Breast epithelium (tissue), 4 donors: ENCODE measurements at regions of chr7 and their contacts with region 1.

Region 1: DNA sequence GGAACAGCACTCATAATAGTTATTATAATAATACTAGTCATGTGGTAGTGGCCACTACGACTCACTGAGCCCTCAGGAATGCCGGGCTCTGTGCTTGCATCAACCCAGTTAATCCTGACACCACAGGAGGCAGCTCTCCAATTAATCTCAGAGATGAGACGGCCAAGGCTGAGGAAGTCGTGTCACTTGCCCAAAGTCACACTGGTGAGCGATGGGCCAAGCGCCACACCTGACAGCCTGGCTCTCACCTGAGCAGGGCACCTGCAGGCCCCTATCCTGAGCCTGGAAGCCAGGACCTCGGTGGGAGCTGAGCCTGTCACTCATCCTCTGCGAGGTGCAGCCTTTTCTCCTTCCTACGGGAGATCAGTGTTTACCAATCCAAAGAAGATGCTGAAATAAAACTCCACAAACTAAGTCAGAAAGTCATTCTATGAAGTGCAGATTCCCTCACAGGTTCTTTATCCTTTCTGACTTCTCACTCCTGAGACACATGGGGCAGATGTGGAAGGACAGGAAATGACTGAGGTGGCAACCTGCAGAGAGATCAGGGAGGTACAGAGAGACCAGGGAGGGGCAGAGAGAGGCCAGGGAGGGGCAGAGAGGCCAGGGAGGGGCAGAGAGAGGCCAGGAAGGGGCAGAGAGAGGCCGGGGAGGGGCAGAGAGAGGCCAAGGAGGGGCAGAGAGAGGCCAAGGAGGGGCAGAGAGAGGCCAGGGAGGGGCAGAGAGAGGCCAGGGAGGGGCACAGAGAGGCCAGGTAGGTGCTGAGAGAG is 38.6 kb downstream of the VIPR2 start:
- DNase-seq: peak in 1 of 2 donors; percentile 25
- H3K4me3 ChIP-seq: no peak overlapping the region
- H3K27ac ChIP-seq: no peak overlapping the region
- H3K4me1 ChIP-seq: no peaks in the 10 kb centered on the region
- H3K27me3 ChIP-seq: no peaks in the 10 kb centered on the region
- CTCF ChIP-seq: no peak
- POLR2A ChIP-seq: no peak

Region 2: DNA sequence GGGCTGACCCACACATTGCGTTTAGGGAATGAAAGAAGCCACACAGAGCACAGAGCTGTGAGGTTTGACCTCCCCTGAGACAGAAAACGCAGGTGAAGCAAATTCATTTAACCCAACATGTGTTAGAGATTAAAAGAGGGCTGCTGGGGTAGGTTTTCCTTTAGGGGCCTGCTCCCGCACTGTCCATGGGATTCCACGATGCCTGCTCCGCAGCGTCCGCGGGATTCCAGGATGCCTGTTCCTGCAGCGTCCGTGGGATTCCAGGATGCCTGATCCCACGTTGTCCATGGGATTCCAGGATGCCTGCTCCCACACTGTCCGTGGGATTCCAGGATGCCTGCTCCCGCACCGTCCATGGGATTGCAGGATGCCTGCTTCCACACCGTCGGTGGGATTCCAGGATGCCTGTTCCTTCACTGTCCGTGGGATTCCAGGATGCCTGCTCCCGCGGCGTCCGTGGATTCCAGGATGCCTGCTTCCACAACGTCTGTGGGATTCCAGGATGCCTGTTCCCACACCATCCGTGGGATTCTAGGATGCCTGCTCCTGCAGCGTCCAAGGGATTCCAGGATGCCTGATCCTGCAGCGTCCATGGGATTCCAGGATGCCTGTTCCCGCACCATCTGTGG is 40.1 kb before region 1 on chr7:
- intact Hi-C with region 1: loop called (anchors 1 kb)
- DNase-seq: peak in 1 of 2 donors; percentile 10
- H3K4me3 ChIP-seq: no peak overlapping the region
- H3K27ac ChIP-seq: no peak overlapping the region
- H3K4me1 ChIP-seq: no peaks in the 10 kb centered on the region
- H3K27me3 ChIP-seq: no peaks in the 10 kb centered on the region
- CTCF ChIP-seq: no peak
- POLR2A ChIP-seq: no peak